ENCODE measurements at regions of chr10 and their contacts with region 1.

Region 1: DNA sequence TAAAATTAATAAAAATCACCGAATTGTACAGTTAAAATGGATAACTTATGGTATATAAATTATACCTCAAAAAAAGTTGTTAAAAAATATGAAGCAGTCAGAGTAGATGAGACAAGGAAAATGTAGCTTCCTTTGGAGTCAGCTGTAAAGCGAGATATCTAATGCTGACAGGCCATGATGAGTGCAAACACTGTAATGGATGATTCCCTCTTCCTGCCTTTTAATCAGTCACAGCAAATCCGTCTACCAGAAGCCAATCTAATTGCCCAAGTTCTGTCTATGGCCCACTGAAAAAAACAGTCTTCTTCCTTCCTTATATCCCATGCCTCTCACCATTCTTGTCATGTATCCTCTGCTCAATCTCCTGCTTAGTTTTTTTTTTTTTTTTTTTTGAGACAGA is 59.9 kb upstream of the DNAJB12 start:
- DNase-seq: no peak
- ATAC-seq: no peak
- H3K4me3 Mint-ChIP-seq: no peak overlapping the region
- H3K27ac Mint-ChIP-seq: no peak overlapping the region
- H3K4me1 Mint-ChIP-seq: no peaks in the 10 kb centered on the region
- H3K27me3 Mint-ChIP-seq: no peaks in the 10 kb centered on the region
- CTCF ChIP-seq: no peak

Region 2: GRCh38 chr10:72079356-72079755 is 335.3 kb before region 1 on chr10:
- CTCF ChIA-PET with region 1: no interaction called
- POLR2A ChIA-PET with region 1: interaction called, 11 read pairs
- intact Hi-C with region 1: no loop called
- DNase-seq: peak; percentile 36
- ATAC-seq: peak; percentile 91
- H3K4me3 Mint-ChIP-seq: peak overlapping the region; percentile 61
- H3K27ac Mint-ChIP-seq: peak overlapping the region; percentile 83
- H3K4me1 Mint-ChIP-seq: peaks cover 75% of the 10 kb centered on the region
- H3K27me3 Mint-ChIP-seq: no peaks in the 10 kb centered on the region
- CTCF ChIP-seq: no peak

Measured in activated B cell treated with CpG ODN at 0.5 μM for 24 hours (primary cell).